Activated CD4-positive, alpha-beta memory T cell treated with anti-CD3 and anti-CD28 coated beads for 36 hours (primary cell): ENCODE measurements at regions of chr10 and their contacts with region 1.

Region 1: GRCh38 chr10:119517235-119518141 is 25.0 kb downstream of the RGS10 start:
- DNase-seq: peak; percentile 85
- H3K4me3 Mint-ChIP-seq: peak overlapping the region; percentile 55
- H3K27ac Mint-ChIP-seq: peak overlapping the region; percentile 85
- H3K4me1 Mint-ChIP-seq: peaks cover 59% of the 10 kb centered on the region
- H3K27me3 Mint-ChIP-seq: no peaks in the 10 kb centered on the region

Region 2: GRCh38 chr10:118927321-118927720 is 590.2 kb before region 1 on chr10:
- CTCF ChIA-PET with region 1: no interaction called
- POLR2A ChIA-PET with region 1: no interaction called
- intact Hi-C with region 1: no loop called
- DNase-seq: no peak
- H3K4me3 Mint-ChIP-seq: no peak overlapping the region
- H3K27ac Mint-ChIP-seq: no peak overlapping the region
- H3K4me1 Mint-ChIP-seq: no peaks in the 10 kb centered on the region
- H3K27me3 Mint-ChIP-seq: peaks cover 13% of the 10 kb centered on the region

Region 3: GRCh38 chr10:119596537-119597404 is 79.3 kb after region 1 on chr10 and contains the start of gene TIAL1:
- CTCF ChIA-PET with region 1: no interaction called
- POLR2A ChIA-PET with region 1: interaction called, 3 read pairs
- intact Hi-C with region 1: loop called (anchors 1 kb)
- DNase-seq: peak; percentile 97
- H3K4me3 Mint-ChIP-seq: peak within 1 kb of the TSS; percentile 89
- H3K27ac Mint-ChIP-seq: peak within 1 kb of the TSS; percentile 97
- H3K4me1 Mint-ChIP-seq: peaks cover 42% of the 10 kb centered on the region
- H3K27me3 Mint-ChIP-seq: no peaks in the 10 kb centered on the region
- total RNA-seq, gene TIAL1: 177 TPM